HEK293T (cell line): ENCODE measurements at regions of chr2 and their contacts with region 1.

Region 1: DNA sequence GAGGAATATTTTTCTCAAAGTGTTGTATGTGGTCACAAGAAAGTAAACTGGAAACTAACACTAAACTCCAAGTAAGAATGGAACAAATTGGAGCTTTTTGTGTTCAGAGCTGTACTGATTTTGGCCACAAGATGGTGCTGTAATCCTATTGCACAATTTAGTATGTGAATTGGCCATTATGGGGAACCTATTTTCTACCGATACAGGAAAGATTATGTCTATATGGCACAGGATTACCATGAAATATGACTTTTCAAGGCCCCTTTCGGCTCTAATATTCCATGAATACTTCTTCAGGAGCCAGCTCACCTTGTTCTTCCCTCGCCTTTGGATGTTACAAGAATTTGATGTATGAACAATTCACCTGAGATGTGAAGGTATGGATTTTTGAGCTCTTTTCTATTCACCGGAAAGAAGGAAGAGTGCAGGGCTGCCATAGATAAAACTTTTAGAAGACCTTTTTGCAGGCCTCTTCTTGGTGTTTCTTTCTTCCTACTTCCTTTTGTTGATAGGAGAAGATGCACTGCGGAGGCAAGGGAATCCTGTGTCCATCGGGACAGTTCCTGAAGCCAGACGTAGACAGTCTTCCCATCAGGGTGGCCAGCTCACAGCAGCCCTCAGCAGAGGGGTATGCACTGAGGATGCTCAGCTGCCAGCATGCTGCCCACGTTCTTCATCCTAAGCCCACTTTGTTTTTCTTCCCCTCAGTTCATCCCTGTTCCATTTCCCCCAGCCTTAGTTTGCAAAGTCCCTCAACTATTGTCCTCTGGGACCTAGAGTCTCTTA is 13.3 kb downstream of the MRPL44 start:
- DNase-seq: peak; percentile 30

Region 2: GRCh38 chr2:223957092-223957851 is 13.3 kb before region 1 on chr2 and contains the start of gene MRPL44:
- CTCF ChIA-PET with region 1: interaction called, 17 read pairs
- POLR2A ChIA-PET with region 1: interaction called, 3 read pairs
- DNase-seq: peak; percentile 92

Region 3: GRCh38 chr2:224025874-224026273 is 55.3 kb after region 1 on chr2:
- CTCF ChIA-PET with region 1: no interaction called
- POLR2A ChIA-PET with region 1: no interaction called
- DNase-seq: no peak

Region 4: GRCh38 chr2:224101820-224102630 is 131.5 kb after region 1 on chr2:
- CTCF ChIA-PET with region 1: no interaction called
- POLR2A ChIA-PET with region 1: no interaction called
- DNase-seq: no peak

Region 5: DNA sequence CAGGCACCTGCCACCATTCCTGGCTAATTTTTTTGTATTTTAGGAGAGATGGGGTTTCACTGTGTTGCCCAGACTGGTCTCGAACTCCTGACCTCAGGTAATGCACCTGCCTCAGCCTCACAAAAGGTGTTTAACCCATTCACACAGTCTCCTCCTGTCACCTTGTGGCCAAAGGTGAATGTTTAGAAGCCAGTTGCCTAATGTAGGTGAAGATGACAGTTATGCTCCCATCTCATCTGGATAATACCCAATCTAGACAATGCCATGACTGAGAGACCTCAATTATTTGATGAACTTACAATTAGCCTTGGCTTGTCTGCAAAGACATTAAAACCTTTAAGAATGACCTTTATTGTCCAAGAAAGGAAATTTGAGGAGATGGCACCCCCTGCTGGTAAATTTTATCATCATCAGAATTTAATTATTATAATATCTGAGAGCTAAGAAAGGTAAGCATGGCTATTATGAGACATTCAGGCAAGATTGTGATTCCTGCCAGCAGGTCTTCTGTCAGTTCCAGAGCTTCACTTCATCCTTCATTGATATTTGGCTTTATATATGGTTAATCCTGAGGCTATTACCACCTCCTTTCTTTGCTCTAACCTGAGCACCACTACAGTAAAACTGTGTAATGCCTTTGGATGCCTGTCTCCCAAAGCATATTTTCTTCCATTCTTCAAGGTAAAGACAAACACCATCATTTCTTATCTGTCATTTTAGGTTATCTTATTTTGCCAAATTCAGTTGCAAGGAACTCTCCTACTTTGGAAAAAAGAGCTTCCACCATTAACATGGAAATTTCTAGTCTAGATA is 313.8 kb after region 1 on chr2:
- CTCF ChIA-PET with region 1: interaction called, 23 read pairs
- POLR2A ChIA-PET with region 1: no interaction called
- DNase-seq: peak; percentile 9